ENCODE measurements at regions of chr12 and their contacts with region 1.

Region 1: DNA sequence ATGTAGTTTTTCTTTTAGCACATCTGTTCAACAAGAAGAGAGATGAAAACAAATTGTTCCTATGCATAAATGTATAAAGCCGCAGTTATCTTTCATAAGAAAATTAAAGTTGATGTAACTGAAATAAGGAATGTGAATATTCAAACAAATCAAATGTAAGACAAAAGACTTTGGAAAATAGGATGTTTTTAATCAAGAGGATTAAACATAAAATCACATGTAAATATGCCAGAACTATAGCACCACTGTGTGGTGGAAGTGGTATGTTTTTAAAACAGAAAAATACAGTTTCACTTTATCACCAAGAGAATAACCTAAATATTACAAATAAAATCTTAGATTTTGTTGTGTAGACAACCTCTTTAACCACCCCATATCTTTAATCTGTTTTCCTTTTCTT is 40.4 kb downstream of the CAPS2 start:
- DNase-seq: no peak
- H3K4me3 ChIP-seq: no peak overlapping the region
- H3K4me3 Mint-ChIP-seq: no peak overlapping the region
- H3K27ac Mint-ChIP-seq: no peak overlapping the region
- H3K4me1 ChIP-seq: no peaks in the 10 kb centered on the region; the same call in 1 of the 2 replicates
- H3K4me1 Mint-ChIP-seq: peaks cover 12% of the 10 kb centered on the region
- H3K27me3 ChIP-seq: no peaks in the 10 kb centered on the region
- H3K27me3 Mint-ChIP-seq: peaks cover 2% of the 10 kb centered on the region
- CTCF ChIP-seq: peak in 1 of 2 experiments; percentile 28

Region 2: GRCh38 chr12:74689071-74689655 is 600.6 kb before region 1 on chr12:
- CTCF ChIA-PET with region 1: no interaction called
- POLR2A ChIA-PET with region 1: no interaction called
- intact Hi-C with region 1: loop called (anchors 10 kb)
- DNase-seq: no peak
- H3K4me3 ChIP-seq: no peak overlapping the region
- H3K4me3 Mint-ChIP-seq: no peak overlapping the region
- H3K27ac Mint-ChIP-seq: no peak overlapping the region
- H3K4me1 ChIP-seq: no peaks in the 10 kb centered on the region
- H3K4me1 Mint-ChIP-seq: no peaks in the 10 kb centered on the region
- H3K27me3 ChIP-seq: no peaks in the 10 kb centered on the region
- H3K27me3 Mint-ChIP-seq: peaks cover 6% of the 10 kb centered on the region
- CTCF ChIP-seq: peak; percentile 41

Region 3: DNA sequence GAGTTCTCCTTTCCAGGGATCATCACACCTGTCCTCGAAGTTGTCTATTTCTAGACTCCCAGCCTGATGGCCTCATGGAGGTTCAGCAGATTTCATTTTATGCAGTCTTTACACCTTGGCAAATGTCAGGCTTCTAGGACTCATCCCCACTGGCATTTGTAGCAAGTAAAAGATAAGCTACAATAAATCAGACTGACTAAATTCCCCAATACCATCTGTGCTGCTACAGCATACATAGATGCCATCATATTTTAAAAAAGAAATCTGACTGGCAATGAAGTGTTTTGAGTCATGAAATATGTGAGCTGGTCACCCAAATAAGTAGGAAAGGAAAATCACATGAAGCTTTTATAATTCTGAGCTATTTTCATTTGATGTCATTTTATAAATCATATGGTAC is 135.4 kb before region 1 on chr12:
- CTCF ChIA-PET with region 1: no interaction called
- POLR2A ChIA-PET with region 1: no interaction called
- intact Hi-C with region 1: loop called (anchors 1 kb)
- DNase-seq: no peak
- H3K4me3 ChIP-seq: no peak overlapping the region
- H3K4me3 Mint-ChIP-seq: no peak overlapping the region
- H3K27ac Mint-ChIP-seq: no peak overlapping the region
- H3K4me1 ChIP-seq: no peaks in the 10 kb centered on the region
- H3K4me1 Mint-ChIP-seq: no peaks in the 10 kb centered on the region
- H3K27me3 ChIP-seq: no peaks in the 10 kb centered on the region
- H3K27me3 Mint-ChIP-seq: no peaks in the 10 kb centered on the region
- CTCF ChIP-seq: no peak

Region 4: GRCh38 chr12:75658901-75659383 is 369.2 kb after region 1 on chr12:
- CTCF ChIA-PET with region 1: no interaction called
- POLR2A ChIA-PET with region 1: no interaction called
- intact Hi-C with region 1: no loop called
- DNase-seq: no peak
- H3K4me3 ChIP-seq: no peak overlapping the region
- H3K4me3 Mint-ChIP-seq: no peak overlapping the region
- H3K27ac Mint-ChIP-seq: no peak overlapping the region
- H3K4me1 ChIP-seq: no peaks in the 10 kb centered on the region; the same call in 1 of the 2 replicates
- H3K4me1 Mint-ChIP-seq: no peaks in the 10 kb centered on the region
- H3K27me3 ChIP-seq: no peaks in the 10 kb centered on the region
- H3K27me3 Mint-ChIP-seq: no peaks in the 10 kb centered on the region
- CTCF ChIP-seq: no peak